Ovary (tissue), 10 donors: ENCODE measurements at regions of chr13 and their contacts with region 1.

Region 1: DNA sequence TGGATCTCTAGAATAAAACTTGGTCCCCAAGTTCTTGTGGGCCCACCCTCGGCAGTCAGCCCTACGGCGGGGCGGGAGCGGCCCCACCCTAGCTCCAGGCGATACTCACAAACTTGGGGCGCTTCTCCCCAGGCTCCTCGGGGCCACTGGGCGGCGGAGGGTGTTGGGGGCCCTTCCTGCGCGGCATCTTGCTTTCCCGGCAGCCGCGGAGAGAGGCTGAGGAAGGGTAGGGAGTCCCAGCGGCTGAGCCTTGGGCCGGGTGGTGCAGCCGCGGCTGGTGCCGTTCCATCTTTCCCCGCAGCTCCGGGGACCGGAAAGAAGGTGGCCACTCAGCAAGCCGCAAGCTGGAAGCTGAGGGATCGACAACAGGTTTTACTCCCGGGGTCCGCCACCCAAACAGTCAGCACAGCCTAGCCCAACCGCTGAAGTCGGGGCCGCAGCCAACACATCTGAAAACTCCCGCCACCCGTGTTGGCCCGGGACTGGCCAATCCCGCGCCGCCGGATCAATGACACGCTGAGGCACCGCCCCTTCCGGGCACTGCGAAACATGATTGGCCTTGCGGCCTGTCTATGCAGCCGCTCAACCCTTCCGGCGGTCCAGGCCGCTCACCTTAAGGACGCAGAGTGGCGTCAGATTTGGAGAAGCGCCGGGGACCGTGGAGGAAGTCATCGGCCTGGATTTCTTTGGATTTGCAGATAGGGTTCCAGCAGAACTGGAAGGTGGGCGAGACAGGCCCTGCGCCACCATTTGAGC is at the start of gene DIAPH3:
- DNase-seq: peak; percentile 94 to 98 (median 95)
- H3K4me3 ChIP-seq: peak within 1 kb of the TSS; percentile 50
- H3K27ac ChIP-seq: peak within 1 kb of the TSS; percentile 84 to 89
- H3K4me1 ChIP-seq: peaks cover 4% of the 10 kb centered on the region
- H3K27me3 ChIP-seq: no peaks in the 10 kb centered on the region
- CTCF ChIP-seq: no peak
- EP300 ChIP-seq: no peak
- POLR2A ChIP-seq: peak; percentile 74
- total RNA-seq, gene DIAPH3: 0.13 to 2.6 (median 0.35) TPM in 6 of 7 donors, not detected in the other

Region 2: DNA sequence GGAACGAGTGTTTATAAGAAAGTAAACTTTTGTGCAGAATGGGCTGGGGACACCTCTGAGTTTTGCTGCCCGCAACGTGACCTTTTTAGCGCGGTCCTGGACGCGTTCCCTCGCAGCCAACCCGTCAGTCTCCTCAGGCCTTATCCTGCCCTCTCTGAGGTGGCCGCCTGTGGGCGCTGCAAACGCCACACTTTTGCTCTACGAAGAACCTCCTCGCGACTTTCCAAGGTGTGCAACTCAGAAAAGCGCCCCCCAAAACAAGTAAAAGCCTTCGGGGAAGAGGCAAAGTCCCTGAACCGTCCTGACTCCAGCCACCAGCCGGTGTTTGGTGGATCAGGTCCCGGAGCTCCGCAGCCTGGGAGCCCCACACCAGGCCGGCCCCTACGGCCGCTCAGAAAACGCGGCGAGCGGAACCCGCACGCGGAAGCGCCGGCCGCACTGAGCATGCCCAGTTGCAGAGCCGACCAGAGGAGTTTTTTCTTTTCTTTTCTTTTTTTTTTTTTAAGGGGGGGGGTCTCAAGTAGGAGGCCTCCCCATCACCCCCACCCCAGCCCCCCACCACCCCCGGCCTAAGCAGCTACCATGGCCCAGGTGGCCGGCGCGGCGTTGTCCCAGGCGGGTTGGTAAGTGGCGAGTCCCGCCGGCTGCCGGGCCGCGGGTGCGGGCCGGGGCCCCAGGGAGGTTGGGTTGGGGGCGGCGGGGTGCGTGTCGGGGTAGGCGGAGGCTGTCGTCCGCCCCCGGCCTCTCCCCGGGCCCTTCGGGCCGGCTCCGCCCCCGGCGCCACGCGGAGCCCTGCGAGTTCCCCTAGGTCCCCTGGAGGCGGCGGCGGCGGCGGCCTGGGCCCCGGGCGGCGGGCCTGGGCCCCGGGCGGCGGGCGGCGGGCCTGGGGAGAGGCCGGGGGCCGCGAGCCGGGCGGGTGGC is 233.4 kb after region 1 on chr13 and contains the start of gene TDRD3:
- intact Hi-C with region 1: loop called in 1 of 4 experiments (anchors 5 kb)
- DNase-seq: peak; percentile 76 to 87 (median 81)
- H3K4me3 ChIP-seq: peak within 1 kb of the TSS; percentile 91
- H3K27ac ChIP-seq: peak within 1 kb of the TSS; percentile 97
- H3K4me1 ChIP-seq: peaks cover 5% of the 10 kb centered on the region
- H3K27me3 ChIP-seq: no peaks in the 10 kb centered on the region
- CTCF ChIP-seq: peak; percentile 41 to 75 (median 73)
- EP300 ChIP-seq: no peak
- POLR2A ChIP-seq: no peak
- total RNA-seq, gene TDRD3: 29.3 to 63.0 (median 43.3) TPM